ENCODE measurements at regions of chr9 and their contacts with region 1.

Region 1: DNA sequence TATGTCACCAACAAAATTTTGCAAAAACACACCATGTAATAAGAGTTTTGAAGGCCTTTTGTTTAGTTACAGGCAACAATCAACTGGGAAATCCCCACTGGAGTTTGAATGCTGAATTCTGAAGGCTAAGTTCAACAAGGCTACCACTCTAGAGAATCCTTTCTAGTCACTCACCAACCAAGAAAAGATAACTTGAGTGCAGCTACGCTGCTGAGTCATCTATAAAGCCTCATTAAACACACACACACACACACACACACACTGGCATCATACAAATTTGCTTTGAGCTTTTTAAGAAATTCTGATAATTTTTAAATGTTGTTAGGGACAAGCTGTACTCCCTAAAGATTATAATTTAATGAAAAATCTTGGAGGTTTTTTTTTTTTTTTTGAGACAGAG is 219.6 kb downstream of the DENND1A start:
- DNase-seq: no peak
- H3K4me3 ChIP-seq: no peak overlapping the region
- CTCF ChIP-seq: no peak
- POLR2A ChIP-seq: no peak

Region 2: DNA sequence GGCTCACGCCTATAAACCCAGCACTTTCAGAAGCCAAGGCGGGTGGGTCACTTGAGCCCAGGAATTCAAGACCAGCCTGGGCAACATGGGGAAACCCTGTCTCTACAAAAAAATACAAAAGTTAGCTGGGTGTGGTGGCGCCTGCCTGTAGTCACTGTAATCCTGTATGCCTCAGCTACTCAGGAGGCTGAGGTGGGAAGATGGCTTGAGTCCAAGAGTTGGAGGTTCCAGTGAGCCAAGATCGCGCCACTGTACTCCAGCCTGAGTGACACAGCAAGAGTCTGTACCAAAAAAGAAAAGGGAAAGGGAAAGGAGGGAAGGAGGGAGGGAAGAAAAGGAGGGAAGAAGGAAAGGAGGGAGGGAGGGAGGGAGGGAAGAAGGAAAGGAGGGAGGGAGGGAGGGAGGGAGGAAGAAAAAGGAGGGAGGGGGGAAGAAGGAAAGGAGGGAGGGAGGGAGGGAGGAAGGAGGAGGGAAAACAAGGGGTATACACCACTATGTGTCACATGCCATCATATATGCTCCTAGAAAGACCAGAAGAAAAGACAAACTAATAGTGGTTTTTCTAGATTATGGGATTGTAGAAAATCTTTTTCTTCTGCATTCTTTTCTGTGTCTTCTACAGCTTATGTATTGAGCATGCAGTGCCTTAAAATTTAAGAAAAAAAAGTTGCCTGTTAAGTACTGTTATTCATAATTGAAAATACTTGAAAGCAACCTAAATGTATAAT is 20.4 kb before region 1 on chr9:
- intact Hi-C with region 1: loop called (anchors 1 kb)
- DNase-seq: no peak
- H3K4me3 ChIP-seq: no peak overlapping the region
- CTCF ChIP-seq: no peak
- POLR2A ChIP-seq: no peak

Region 3: DNA sequence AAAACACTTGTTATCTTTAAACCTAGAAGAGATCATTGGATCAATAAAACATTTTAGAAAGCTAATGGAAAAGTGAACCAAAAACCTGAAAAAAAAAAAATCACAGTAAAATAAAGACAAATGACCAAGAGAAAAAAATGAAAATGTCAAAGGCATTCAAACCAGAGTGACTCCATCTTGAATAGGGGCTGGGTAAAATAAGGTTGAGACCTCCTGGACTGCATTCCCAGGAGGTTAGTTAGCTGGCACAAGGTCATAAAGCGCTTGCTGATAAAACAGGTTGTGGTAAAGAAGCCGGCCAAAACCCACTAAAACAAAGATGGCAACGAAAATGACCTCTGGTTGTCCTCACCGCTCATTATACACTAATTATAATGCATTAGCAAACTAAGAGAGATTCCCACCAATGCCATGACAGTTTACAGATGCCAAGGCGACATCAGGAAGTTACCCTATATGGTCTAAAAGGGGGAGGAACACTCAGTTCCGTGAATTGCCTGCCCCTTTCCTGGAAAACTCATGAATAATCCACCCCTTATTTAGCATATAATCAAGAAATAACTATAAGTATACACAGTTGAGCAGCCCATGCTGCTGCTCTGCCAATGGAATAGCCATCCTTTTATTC is 430.8 kb after region 1 on chr9:
- intact Hi-C with region 1: loop called (anchors 5 kb)
- DNase-seq: peak in 1 of 2 donors; percentile 4
- H3K4me3 ChIP-seq: no peak overlapping the region
- CTCF ChIP-seq: no peak
- POLR2A ChIP-seq: no peak